AG04450 (cell line): ENCODE measurements at regions of chr10 and their contacts with region 1.

Region 1: GRCh38 chr10:44725404-44725803 is 185.7 kb upstream of the TMEM72 start:
- DNase-seq: no peak
- H3K4me3 ChIP-seq: no peak overlapping the region
- H3K27ac ChIP-seq: no peak overlapping the region
- H3K27me3 ChIP-seq: no peaks in the 10 kb centered on the region
- CTCF ChIP-seq: no peak

Region 2: GRCh38 chr10:44706745-44707144 is 18.7 kb before region 1 on chr10:
- CTCF ChIA-PET with region 1: no interaction called
- POLR2A ChIA-PET with region 1: no interaction called
- DNase-seq: peak; percentile 83
- H3K4me3 ChIP-seq: no peak overlapping the region
- H3K27ac ChIP-seq: peak overlapping the region; percentile 87
- H3K27me3 ChIP-seq: no peaks in the 10 kb centered on the region
- CTCF ChIP-seq: no peak

Region 3: GRCh38 chr10:44745920-44746319 is 20.5 kb after region 1 on chr10:
- CTCF ChIA-PET with region 1: no interaction called
- POLR2A ChIA-PET with region 1: no interaction called
- DNase-seq: no peak
- H3K4me3 ChIP-seq: no peak overlapping the region
- H3K27ac ChIP-seq: no peak overlapping the region
- H3K27me3 ChIP-seq: no peaks in the 10 kb centered on the region
- CTCF ChIP-seq: no peak

Region 4: DNA sequence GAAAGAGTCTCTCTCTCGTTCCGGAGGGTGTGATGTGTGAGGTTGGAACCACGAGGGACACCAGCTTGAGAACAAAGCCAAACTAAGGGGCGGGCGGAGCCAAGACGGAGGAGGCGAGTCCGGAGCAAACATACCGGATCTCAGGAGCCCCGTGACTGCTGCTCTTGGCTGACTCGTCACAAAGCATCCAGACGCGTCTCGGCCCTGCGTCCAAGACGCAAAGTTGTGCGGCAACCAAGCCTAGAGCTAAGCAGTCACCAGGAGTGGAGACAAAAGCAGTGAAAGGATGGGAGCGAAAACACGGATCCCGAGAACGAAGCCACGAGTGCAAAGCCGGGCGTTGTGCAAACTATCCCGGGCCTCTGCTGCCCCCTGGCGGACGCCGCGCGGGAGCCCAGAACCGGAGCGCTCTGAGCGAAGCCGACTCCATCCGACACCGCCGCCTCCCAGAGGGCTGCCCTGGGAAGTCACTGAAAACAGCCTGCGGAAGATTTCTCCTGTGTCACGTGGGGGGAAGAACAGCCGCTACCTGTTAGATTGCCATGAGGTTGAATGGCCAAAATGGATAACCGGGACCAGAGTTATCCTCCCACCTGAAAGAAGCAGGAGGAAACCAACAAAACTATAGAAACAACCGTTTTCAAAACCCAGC is 139.4 kb after region 1 on chr10:
- CTCF ChIA-PET with region 1: interaction called, 13 read pairs
- POLR2A ChIA-PET with region 1: no interaction called
- DNase-seq: peak; percentile 58
- H3K4me3 ChIP-seq: peak overlapping the region; percentile 68
- H3K27ac ChIP-seq: peak overlapping the region; percentile 81
- H3K27me3 ChIP-seq: peaks cover 3% of the 10 kb centered on the region
- CTCF ChIP-seq: peak; percentile 94